ENCODE measurements at regions of chr15 and their contacts with region 1.

Region 1: DNA sequence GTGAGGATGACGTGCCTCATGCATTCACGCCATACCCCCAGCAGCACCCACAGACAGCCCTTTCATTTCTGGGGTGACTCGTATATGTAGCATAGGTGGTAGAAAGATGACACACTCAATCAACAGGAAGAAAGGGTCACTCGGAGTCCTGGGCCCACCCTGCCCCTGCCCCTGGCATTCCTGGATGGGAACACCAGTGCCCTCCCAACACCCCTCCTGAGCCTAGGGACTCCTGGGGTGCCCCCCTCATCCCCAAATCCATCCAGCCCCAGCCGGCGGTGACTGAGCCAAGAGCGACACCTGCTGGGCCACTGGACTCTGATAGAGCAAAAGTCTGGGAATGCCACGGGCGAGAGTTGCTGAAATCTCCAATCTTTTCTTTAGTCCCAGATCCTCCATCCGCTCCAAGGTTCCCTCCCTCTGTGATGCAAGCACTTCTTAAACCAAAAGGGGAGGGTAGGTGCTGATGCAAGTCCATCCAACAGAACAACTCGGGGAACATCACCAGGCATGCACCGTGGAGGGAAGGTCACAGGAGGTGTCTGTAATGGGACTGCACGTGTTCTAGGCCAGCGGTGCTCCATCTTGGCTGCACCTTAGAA is 31.1 kb downstream of the ACAN start:
- DNase-seq: peak; percentile 44 to 57
- ATAC-seq: peak; percentile 61 to 87
- H3K4me3 ChIP-seq: no peak overlapping the region
- H3K27ac ChIP-seq: no peak overlapping the region
- H3K4me1 ChIP-seq: no peaks in the 10 kb centered on the region; the same call in 2 of the 3 replicates
- CTCF ChIP-seq: peak; percentile 84
- EP300 ChIP-seq: no peak
- POLR2A ChIP-seq: no peak
- RAD21 ChIP-seq: peak; percentile 95 to 96

Region 2: DNA sequence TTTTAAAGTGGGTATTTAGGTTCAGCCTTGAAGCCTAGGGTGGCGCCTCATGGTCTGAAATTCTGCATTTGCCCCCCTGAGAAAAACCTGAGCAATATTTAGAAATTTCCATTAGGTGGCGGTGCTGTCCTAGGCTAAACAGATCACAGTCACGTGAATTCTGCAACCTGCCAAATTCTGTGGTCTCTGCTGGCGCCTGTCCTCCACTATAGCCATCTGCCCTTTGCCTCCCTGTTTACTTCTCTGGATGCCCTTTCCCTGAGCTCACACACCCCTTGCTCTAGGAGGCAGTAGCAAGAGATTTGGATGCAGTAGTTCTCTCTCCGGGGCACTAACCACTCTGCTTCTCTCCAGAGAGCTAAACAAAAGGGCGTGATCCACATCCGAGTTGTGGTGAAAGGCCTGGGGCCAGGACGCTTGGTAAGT is 357.7 kb before region 1 on chr15:
- CTCF ChIA-PET with region 1: interaction called, 21 read pairs
- POLR2A ChIA-PET with region 1: no interaction called
- DNase-seq: peak; percentile 48 to 68
- ATAC-seq: peak; percentile 24 to 75; a peak in 4 of 6 replicates
- H3K4me3 ChIP-seq: no peak overlapping the region
- H3K27ac ChIP-seq: no peak overlapping the region
- H3K4me1 ChIP-seq: no peaks in the 10 kb centered on the region
- CTCF ChIP-seq: peak; percentile 78
- EP300 ChIP-seq: no peak
- POLR2A ChIP-seq: no peak
- RAD21 ChIP-seq: peak; percentile 84 to 85

Region 3: GRCh38 chr15:88664151-88664778 is 170.0 kb before region 1 on chr15:
- CTCF ChIA-PET with region 1: interaction called, 297 read pairs
- POLR2A ChIA-PET with region 1: no interaction called
- DNase-seq: no peak
- ATAC-seq: peak; percentile 48 to 75; a peak in 4 of 6 replicates
- H3K4me3 ChIP-seq: no peak overlapping the region
- H3K27ac ChIP-seq: no peak overlapping the region
- H3K4me1 ChIP-seq: no peaks in the 10 kb centered on the region
- CTCF ChIP-seq: peak; percentile 27; the same call in 2 of the 3 replicates
- EP300 ChIP-seq: no peak
- POLR2A ChIP-seq: no peak
- RAD21 ChIP-seq: peak; percentile 55 to 59; a peak in 4 of 5 replicates

Region 4: GRCh38 chr15:88800026-88800425 is 34.3 kb before region 1 on chr15:
- CTCF ChIA-PET with region 1: interaction called, 13 read pairs
- POLR2A ChIA-PET with region 1: no interaction called
- DNase-seq: peak in 1 of 2 experiments; percentile 36
- ATAC-seq: peak; percentile 34 to 45; a peak in 2 of 6 replicates
- H3K4me3 ChIP-seq: no peak overlapping the region
- H3K27ac ChIP-seq: no peak overlapping the region
- H3K4me1 ChIP-seq: peaks cover 7% of the 10 kb centered on the region; the same call in 1 of the 3 replicates
- CTCF ChIP-seq: no peak
- EP300 ChIP-seq: no peak
- POLR2A ChIP-seq: no peak
- RAD21 ChIP-seq: no peak

Region 5: GRCh38 chr15:88872106-88872505 is 37.8 kb after region 1 on chr15:
- CTCF ChIA-PET with region 1: interaction called, 16 read pairs
- POLR2A ChIA-PET with region 1: no interaction called
- DNase-seq: no peak
- ATAC-seq: no peak; a peak in 1 of 6 replicates
- H3K4me3 ChIP-seq: no peak overlapping the region
- H3K27ac ChIP-seq: no peak overlapping the region
- H3K4me1 ChIP-seq: no peaks in the 10 kb centered on the region
- CTCF ChIP-seq: no peak
- EP300 ChIP-seq: no peak
- POLR2A ChIP-seq: no peak
- RAD21 ChIP-seq: no peak

Measured in A549 (cell line).